K562 (cell line): ENCODE measurements at regions of chr1 and their contacts with region 1.

Region 1: DNA sequence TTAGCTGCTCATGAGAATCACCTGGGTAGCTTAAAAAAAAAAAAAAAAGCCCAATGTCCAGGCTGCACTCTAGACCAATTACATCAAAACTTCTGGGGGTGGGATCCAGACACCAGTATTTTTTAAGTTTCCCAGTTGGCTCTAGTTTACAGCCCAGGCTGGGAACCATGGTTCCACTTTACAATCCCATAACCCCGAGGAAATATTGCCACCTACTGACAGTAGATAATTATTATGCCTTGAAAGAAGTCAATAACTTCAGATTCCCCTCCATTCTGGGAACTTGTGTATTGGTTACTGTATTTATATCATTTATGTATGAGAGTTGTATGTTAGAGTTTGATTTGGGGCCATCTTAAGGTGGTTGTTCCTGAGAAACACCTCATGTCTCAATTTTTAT is 100.2 kb downstream of the SPATA46 start:
- DNase-seq: peak in 2 of 4 experiments; percentile 34 to 43
- ATAC-seq: peak; percentile 72
- H3K4me3 ChIP-seq: no peak overlapping the region
- H3K27ac ChIP-seq: no peak overlapping the region
- H3K4me1 ChIP-seq: peaks cover 3 to 23% of the 10 kb centered on the region in 2 experiments; a peak in 4 of 5 replicates
- H3K27me3 ChIP-seq: no peaks in the 10 kb centered on the region
- CTCF ChIP-seq: peak; percentile 41 to 70 (median 44); a peak in 5 of 6 replicates
- EP300 ChIP-seq: no peak
- POLR2A ChIP-seq: no peak
- RAD21 ChIP-seq: peak; percentile 75 to 77

Region 2: GRCh38 chr1:161792740-161793139 is 483.8 kb before region 1 on chr1:
- CTCF ChIA-PET with region 1: no interaction called
- POLR2A ChIA-PET with region 1: no interaction called
- in situ Hi-C with region 1: no loop called
- intact Hi-C with region 1: loop called (anchors 2 kb)
- DNase-seq: peak; percentile 32 to 52 (median 50)
- ATAC-seq: peak; percentile 87
- H3K4me3 ChIP-seq: no peak overlapping the region
- H3K27ac ChIP-seq: no peak overlapping the region
- H3K4me1 ChIP-seq: no peaks in the 10 kb centered on the region; a peak in 1 of 5 replicates
- H3K27me3 ChIP-seq: no peaks in the 10 kb centered on the region
- CTCF ChIP-seq: peak in 2 of 3 experiments; percentile 46 to 67; a peak in 4 of 6 replicates
- EP300 ChIP-seq: no peak
- POLR2A ChIP-seq: no peak
- RAD21 ChIP-seq: peak; percentile 63 to 64

Region 3: GRCh38 chr1:162056043-162056442 is 220.4 kb before region 1 on chr1:
- CTCF ChIA-PET with region 1: interaction called, 9 read pairs
- POLR2A ChIA-PET with region 1: interaction called, 3 read pairs
- in situ Hi-C with region 1: loop called (anchors 5 kb)
- intact Hi-C with region 1: loop called (anchors 1 kb)
- DNase-seq: peak; percentile 62 to 70 (median 65)
- ATAC-seq: peak; percentile 99
- H3K4me3 ChIP-seq: no peak overlapping the region
- H3K27ac ChIP-seq: no peak overlapping the region
- H3K4me1 ChIP-seq: no peaks in the 10 kb centered on the region
- H3K27me3 ChIP-seq: peaks cover 0 to 7% of the 10 kb centered on the region in 2 experiments; a peak in 1 of 5 replicates
- CTCF ChIP-seq: peak; percentile 88 to 93 (median 88)
- EP300 ChIP-seq: no peak
- POLR2A ChIP-seq: no peak
- RAD21 ChIP-seq: peak; percentile 91 to 94

Region 4: GRCh38 chr1:162627662-162628296 is 351.3 kb after region 1 on chr1:
- CTCF ChIA-PET with region 1: no interaction called
- POLR2A ChIA-PET with region 1: no interaction called
- in situ Hi-C with region 1: no loop called
- intact Hi-C with region 1: loop called (anchors 10 kb)
- DNase-seq: peak; percentile 47 to 82 (median 52)
- ATAC-seq: peak; percentile 82
- H3K4me3 ChIP-seq: no peak overlapping the region
- H3K27ac ChIP-seq: no peak overlapping the region
- H3K4me1 ChIP-seq: peaks cover 7 to 32% of the 10 kb centered on the region in 2 experiments
- H3K27me3 ChIP-seq: no peaks in the 10 kb centered on the region
- CTCF ChIP-seq: peak; percentile 67 to 74 (median 71)
- EP300 ChIP-seq: no peak
- POLR2A ChIP-seq: no peak
- RAD21 ChIP-seq: peak in 1 of 2 experiments; percentile 71; a peak in 3 of 4 replicates